ENCODE measurements at regions of chr6 and their contacts with region 1.

Region 1: DNA sequence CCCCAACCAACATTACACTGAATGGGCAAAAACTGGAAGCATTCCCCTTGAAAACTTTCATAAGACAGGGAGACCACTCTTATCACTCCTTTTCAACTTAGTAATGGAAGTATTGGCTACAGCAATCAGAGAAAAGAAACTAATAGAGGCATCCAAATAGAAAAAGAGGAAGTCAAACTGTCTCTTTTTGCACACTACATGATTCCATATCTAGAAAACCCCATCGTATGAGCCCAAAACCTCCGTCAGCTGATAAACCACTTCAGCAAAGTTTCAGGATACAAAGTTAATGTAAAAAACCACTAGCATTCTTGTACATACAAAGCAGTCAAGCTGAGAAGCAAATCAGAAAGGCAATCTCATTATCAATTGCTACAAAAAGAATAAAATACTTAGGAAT is 580.4 kb upstream of the PTCHD4 start:
- DNase-seq: no peak
- ATAC-seq: no peak
- H3K4me3 ChIP-seq: no peak overlapping the region
- H3K4me3 Mint-ChIP-seq: no peak overlapping the region
- H3K27ac ChIP-seq: no peak overlapping the region
- H3K27ac Mint-ChIP-seq: no peak overlapping the region
- H3K4me1 ChIP-seq: no peaks in the 10 kb centered on the region
- H3K4me1 Mint-ChIP-seq: no peaks in the 10 kb centered on the region
- H3K27me3 ChIP-seq: no peaks in the 10 kb centered on the region
- H3K27me3 Mint-ChIP-seq: no peaks in the 10 kb centered on the region
- CTCF ChIP-seq: no peak

Region 2: DNA sequence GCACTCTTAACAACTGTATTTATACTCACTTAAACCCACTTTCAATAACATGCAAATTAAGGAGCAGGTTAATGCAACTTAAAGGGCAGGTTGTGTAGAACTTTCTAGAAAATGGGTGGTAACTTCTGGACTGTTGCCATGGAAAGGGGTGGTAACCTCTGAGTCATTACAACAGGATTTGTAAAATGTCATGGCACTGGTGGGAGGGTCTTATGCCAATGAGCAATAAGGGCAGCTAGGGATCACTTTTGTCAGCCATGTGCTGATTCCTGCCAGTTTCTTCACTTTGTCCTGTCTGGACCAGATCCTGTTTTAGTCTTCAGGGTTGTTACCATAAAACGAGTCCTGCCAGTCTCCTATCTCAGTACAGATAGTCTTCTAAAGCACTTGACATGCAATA is 19.9 kb before region 1 on chr6:
- CTCF ChIA-PET with region 1: no interaction called
- POLR2A ChIA-PET with region 1: no interaction called
- intact Hi-C with region 1: loop called in 1 of 2 experiments (anchors 1 kb)
- DNase-seq: no peak
- ATAC-seq: no peak
- H3K4me3 ChIP-seq: no peak overlapping the region
- H3K4me3 Mint-ChIP-seq: no peak overlapping the region
- H3K27ac ChIP-seq: no peak overlapping the region
- H3K27ac Mint-ChIP-seq: no peak overlapping the region
- H3K4me1 ChIP-seq: no peaks in the 10 kb centered on the region
- H3K4me1 Mint-ChIP-seq: no peaks in the 10 kb centered on the region
- H3K27me3 ChIP-seq: no peaks in the 10 kb centered on the region
- H3K27me3 Mint-ChIP-seq: no peaks in the 10 kb centered on the region
- CTCF ChIP-seq: no peak

Region 3: DNA sequence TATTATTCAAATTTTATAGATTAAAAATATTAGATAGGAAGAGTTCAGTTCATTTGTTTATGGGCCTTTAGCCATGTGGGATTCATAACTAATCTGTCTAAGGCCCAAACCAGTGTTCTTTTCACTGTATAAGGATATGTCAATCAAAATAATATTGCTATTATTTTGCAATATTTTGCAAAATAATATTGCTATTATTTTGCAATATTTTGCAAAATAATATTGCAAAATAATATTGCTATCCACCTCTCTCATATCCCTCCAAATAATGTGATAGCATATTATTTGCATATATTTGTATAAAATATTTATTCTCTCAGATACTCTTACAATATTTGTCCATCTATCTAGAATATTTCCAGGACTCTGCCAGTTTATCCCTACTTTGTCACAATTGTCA is 14.9 kb after region 1 on chr6:
- CTCF ChIA-PET with region 1: no interaction called
- POLR2A ChIA-PET with region 1: no interaction called
- intact Hi-C with region 1: no loop called
- DNase-seq: no peak
- ATAC-seq: no peak
- H3K4me3 ChIP-seq: no peak overlapping the region
- H3K4me3 Mint-ChIP-seq: no peak overlapping the region
- H3K27ac ChIP-seq: no peak overlapping the region
- H3K27ac Mint-ChIP-seq: no peak overlapping the region
- H3K4me1 ChIP-seq: no peaks in the 10 kb centered on the region
- H3K4me1 Mint-ChIP-seq: no peaks in the 10 kb centered on the region
- H3K27me3 ChIP-seq: no peaks in the 10 kb centered on the region
- H3K27me3 Mint-ChIP-seq: no peaks in the 10 kb centered on the region
- CTCF ChIP-seq: no peak